ENCODE measurements at regions of chrX and their contacts with region 1.

Region 1: DNA sequence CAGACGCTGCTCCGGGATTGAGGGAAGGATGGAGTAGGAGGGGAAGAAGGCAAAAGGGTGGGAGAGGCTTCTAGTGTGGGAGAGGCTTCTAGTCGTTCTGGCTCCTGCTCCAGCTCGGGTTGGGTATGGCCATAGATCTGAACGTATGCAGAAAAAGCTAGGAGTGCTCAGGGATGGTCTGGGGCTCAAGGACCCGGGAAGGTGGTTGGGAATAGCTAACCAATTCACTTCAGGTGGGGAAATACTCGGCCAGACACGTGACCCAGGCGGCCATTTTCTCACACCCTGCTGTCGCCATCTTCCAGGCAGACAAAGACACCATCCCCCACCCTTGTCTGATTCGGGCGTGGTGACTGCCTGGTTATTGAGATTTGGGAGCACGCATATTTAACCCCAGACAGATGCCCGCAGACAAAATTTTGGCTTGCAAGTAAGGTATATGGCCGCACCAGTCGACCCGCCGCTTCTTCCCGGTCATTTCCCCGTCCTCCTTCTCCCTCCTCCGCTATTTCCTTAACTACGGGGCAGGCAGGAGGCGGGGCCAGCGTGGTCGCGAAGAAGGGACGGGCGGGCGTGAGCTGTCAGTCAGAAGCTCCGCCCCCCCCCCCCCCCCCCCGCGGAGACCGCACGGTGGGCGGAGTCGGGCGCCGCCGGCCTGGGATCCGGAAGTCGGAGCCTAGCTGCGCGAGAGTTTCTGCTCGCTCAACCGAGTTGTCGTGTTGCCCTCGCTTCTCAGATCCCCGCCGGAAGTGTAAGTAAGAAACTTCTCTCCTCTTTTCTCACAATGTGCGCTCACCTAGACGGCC is at the start of gene GNL3L:
- DNase-seq: peak; percentile 79
- H3K4me3 ChIP-seq: peak within 1 kb of the TSS; percentile 46 to 52
- H3K27ac ChIP-seq: peak within 1 kb of the TSS; percentile 70 to 76
- H3K4me1 ChIP-seq: no peaks in the 10 kb centered on the region
- H3K27me3 ChIP-seq: no peaks in the 10 kb centered on the region
- CTCF ChIP-seq: no peak
- POLR2A ChIP-seq: peak; percentile 42
- total RNA-seq, gene GNL3L: 30.4 to 34.2 TPM

Region 2: DNA sequence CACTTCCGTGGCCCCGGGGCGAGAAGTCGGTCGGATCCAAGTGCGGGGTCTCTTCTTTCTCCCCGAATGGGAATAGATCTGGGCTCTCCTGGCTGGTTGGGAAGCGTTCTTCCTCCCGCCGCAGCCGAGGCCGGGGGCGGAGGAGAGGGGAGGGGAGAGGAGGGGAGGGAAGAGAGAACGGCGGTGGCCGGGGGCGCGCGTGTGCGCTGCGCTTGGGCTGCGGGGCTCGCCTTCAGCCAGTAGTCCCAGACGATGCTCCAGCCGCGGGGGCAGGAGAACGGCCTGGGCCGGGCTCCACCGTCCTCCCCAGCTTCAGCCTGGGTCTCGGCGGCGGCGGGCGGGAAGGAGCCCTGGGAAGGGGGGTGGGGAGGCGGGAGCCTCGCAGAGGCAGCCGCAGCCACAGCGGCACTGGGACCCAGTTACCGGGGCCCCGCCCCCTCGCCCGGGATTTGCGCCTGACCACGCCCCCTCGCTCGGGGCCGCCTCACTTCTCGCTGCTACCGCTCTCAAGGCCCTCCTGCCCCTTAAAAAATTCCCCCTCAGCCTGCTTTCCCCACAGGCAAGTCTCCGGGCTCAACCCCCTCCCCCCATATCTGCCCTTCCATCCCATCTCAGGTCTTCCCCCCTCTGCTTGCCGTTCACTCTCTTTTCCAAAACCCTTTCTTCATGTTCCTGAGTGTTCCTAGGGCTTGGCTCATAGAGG is 33.8 kb before region 1 on chrX and contains the start of gene FGD1:
- intact Hi-C with region 1: loop called (anchors 5 kb)
- DNase-seq: peak; percentile 52
- H3K4me3 ChIP-seq: peak within 1 kb of the TSS; percentile 49 to 55
- H3K27ac ChIP-seq: peak within 1 kb of the TSS; percentile 67 to 68
- H3K4me1 ChIP-seq: no peaks in the 10 kb centered on the region
- H3K27me3 ChIP-seq: no peaks in the 10 kb centered on the region
- CTCF ChIP-seq: no peak
- POLR2A ChIP-seq: no peak
- total RNA-seq, gene FGD1: 6.6 to 7.0 TPM

Region 3: DNA sequence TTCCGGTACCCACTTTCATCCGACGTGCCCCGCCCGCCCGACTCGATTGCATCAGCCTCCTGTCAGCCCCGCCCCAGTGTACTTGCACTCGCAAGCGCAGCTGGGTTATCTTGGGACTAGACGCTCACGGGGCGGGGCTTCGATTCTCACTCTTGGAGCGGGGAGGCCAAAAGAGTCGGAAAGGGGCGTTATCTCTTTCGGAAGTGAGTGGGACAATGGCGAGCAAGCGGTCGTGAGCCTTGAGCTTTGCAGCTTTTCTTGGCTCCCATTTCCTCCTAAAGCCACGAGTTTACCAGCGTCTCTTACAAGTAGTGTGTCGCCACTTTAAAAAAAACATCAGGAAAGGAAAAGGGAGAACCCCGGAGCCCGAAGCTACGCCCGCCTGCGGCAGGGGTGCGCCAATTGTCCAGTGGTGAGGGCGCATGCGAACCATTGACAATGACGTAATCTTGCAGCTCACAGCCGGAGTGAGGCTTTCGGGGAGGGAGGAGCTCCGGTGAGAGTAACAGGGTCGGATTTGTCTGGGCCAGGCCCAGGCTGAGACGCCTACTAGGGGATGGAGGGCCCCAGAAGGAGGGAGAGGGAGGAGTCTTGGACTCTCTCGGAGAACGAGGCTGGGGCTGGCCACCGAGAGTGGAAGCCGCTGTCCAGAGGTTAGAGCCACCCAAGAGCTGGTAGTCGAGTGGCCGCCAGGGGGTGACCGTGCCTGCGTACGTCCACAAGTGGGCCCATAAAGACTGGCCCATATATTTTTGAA is 109.8 kb after region 1 on chrX:
- intact Hi-C with region 1: loop called (anchors 10 kb)
- DNase-seq: peak; percentile 89
- H3K4me3 ChIP-seq: peak overlapping the region; percentile 36 to 42
- H3K27ac ChIP-seq: peak overlapping the region; percentile 86 to 89
- H3K4me1 ChIP-seq: no peaks in the 10 kb centered on the region
- H3K27me3 ChIP-seq: no peaks in the 10 kb centered on the region
- CTCF ChIP-seq: peak in 3 of 4 experiments; percentile 40 to 68 (median 62)
- POLR2A ChIP-seq: peak; percentile 45